ENCODE measurements at regions of chr2 and their contacts with region 1.

Region 1: DNA sequence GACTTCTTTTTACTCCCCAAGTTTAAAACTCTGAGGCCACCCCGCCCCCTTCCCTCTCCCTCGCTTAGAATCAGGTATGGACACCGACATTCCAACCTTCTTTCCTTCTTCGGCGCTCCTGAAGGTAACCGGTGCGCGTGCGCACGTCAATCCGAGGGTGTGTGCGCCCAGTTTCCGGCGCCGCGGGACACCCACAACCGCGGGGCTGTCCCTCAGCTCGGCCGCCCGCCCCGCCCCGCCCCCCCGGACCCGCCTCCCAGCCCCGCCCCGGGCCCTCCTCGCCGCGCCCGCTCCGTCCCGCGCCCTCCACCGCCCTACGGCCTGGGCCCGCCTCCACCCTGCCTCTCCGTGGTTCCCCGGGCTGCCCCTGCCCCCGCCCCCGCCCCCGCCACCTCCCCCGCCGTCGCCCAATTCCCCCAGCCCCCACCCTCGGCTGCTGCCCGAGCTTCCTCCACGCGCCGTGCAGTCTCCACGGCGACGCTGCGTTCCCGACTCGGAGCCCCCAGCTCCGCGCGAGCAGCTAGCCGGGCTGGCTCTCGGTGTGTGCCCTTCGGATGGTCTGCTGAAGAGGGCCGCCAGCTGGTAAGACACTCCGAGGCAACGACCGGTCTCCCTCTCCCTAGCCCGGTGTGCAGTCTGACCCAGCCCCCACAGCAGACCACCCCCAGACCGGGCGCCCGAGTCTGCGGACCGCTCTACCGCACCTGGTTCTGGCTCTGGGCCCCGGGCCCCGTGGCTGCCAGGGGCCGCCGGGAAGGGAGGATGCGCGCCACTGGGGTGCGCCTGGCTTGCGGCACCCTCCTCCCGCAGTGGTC is 635 bp downstream of the ERICH2 start:
- DNase-seq: peak; percentile 93
- H3K4me3 ChIP-seq: peak overlapping the region; percentile 80
- H3K4me3 Mint-ChIP-seq: peak overlapping the region; percentile 93
- H3K27ac Mint-ChIP-seq: peak overlapping the region; percentile 97
- H3K4me1 ChIP-seq: peaks cover 37% of the 10 kb centered on the region
- H3K4me1 Mint-ChIP-seq: peaks cover 19% of the 10 kb centered on the region
- H3K27me3 ChIP-seq: no peaks in the 10 kb centered on the region
- H3K27me3 Mint-ChIP-seq: no peaks in the 10 kb centered on the region
- CTCF ChIP-seq: no peak

Region 2: DNA sequence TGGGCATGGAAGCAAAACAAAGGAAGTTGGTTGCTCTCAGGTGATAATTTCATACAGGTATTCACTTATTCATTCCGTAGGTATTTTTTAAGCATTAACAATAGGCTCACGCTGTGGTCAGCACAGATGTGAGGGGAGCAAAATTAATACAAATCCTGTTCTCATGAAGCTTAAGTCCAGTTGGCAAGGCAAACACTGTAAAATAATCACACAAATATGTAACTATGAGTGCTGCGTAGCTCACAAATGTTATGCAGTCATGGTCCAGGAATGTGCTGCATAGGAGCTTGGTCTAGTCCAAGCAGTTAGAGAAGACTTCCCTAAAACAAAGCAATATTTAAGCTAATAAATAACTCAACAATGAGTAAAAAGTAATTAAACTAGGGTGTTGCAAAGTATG is 31.8 kb before region 1 on chr2:
- CTCF ChIA-PET with region 1: interaction called, 3 read pairs
- POLR2A ChIA-PET with region 1: interaction called, 8 read pairs
- intact Hi-C with region 1: loop called (anchors 1 kb)
- DNase-seq: peak; percentile 39 to 55
- H3K4me3 ChIP-seq: no peak overlapping the region
- H3K4me3 Mint-ChIP-seq: no peak overlapping the region
- H3K27ac Mint-ChIP-seq: peak overlapping the region; percentile 90
- H3K4me1 ChIP-seq: peaks cover 17% of the 10 kb centered on the region
- H3K4me1 Mint-ChIP-seq: peaks cover 14% of the 10 kb centered on the region
- H3K27me3 ChIP-seq: no peaks in the 10 kb centered on the region
- H3K27me3 Mint-ChIP-seq: no peaks in the 10 kb centered on the region
- CTCF ChIP-seq: no peak